HepG2 (cell line): ENCODE measurements at regions of chr3 and their contacts with region 1.

Region 1: DNA sequence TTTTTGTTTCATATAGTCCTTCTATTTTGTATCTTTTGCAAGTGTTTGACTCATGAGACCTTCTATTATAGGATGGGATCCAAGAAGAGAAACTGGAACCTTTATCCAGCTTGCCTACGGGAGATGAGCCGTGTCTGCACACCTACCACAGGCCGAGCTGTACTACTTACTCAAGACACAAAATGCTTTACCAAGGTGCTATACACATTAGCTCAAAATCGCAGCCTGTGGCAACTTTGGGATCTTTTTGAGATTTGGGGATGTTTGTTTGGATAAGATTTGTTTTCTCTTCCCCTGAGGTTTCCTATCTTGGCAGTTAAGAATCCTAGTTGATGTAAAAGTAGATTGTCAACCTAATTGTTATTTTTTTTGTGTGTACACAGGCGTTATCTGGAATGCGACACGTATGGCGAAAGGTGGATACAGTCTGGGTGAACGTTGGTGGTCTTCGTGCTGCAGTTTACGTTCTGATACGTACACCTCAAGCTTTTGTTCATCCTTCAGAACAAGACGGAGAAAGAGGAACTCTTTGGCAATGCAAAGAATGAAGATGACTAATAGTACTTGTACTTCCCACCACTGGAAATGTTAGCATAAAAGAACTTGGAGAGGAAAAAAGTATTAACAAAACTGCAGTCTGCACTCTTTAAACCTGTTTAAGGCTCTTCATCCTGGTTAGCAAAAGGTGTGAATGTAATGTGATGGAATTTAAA is 13.1 kb upstream of the SETD5 start:
- DNase-seq: no peak
- ATAC-seq: peak; percentile 19
- H3K4me3 ChIP-seq: no peak overlapping the region
- H3K27ac ChIP-seq: no peak overlapping the region
- H3K4me1 ChIP-seq: peaks cover 22% of the 10 kb centered on the region
- H3K27me3 ChIP-seq: no peaks in the 10 kb centered on the region
- CTCF ChIP-seq: no peak
- EP300 ChIP-seq: no peak
- POLR2A ChIP-seq: no peak; a peak in 2 of 4 replicates
- RAD21 ChIP-seq: no peak

Region 2: GRCh38 chr3:9422712-9423424 is 38.6 kb after region 1 on chr3:
- CTCF ChIA-PET with region 1: no interaction called
- POLR2A ChIA-PET with region 1: no interaction called
- in situ Hi-C with region 1: no loop called
- intact Hi-C with region 1: loop called (anchors 5 kb)
- DNase-seq: peak; percentile 98
- ATAC-seq: peak; percentile 99
- H3K4me3 ChIP-seq: peak overlapping the region in 2 of 3 experiments; percentile 15 to 35; a peak in 3 of 6 replicates
- H3K27ac ChIP-seq: peak overlapping the region; percentile 60
- H3K4me1 ChIP-seq: peaks cover 89% of the 10 kb centered on the region
- H3K27me3 ChIP-seq: no peaks in the 10 kb centered on the region
- CTCF ChIP-seq: peak; percentile 40
- EP300 ChIP-seq: peak in 1 of 2 experiments; percentile 32; a peak in 2 of 4 replicates
- POLR2A ChIP-seq: peak; percentile 24 to 67; a peak in 2 of 4 replicates
- RAD21 ChIP-seq: peak; percentile 58

Region 3: DNA sequence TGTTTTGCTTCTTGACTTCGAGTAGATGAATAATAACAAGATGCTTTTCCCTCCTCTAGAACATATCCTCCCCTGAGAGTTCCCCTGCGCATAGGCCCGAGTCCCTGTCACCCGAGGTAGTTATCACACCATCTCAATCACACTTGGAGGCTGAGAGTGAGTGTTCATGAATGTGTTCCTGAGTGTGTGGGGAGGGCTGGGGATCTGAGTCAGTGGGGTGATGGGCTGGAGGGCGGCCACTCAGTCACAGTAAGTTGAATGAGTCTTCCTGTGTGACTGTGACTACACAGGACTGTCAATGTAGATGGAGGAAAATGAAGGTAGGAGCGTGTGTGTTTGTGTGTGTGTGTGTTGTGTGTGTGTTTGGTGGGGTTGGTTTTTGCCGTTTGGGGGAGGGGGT is 84.2 kb after region 1 on chr3:
- CTCF ChIA-PET with region 1: no interaction called
- POLR2A ChIA-PET with region 1: no interaction called
- in situ Hi-C with region 1: no loop called
- intact Hi-C with region 1: no loop called
- DNase-seq: no peak
- ATAC-seq: no peak
- H3K4me3 ChIP-seq: no peak overlapping the region
- H3K27ac ChIP-seq: no peak overlapping the region
- H3K4me1 ChIP-seq: no peaks in the 10 kb centered on the region
- H3K27me3 ChIP-seq: no peaks in the 10 kb centered on the region
- CTCF ChIP-seq: no peak
- EP300 ChIP-seq: no peak
- POLR2A ChIP-seq: no peak
- RAD21 ChIP-seq: no peak